ENCODE measurements at regions of chr18 and their contacts with region 1.

Region 1: DNA sequence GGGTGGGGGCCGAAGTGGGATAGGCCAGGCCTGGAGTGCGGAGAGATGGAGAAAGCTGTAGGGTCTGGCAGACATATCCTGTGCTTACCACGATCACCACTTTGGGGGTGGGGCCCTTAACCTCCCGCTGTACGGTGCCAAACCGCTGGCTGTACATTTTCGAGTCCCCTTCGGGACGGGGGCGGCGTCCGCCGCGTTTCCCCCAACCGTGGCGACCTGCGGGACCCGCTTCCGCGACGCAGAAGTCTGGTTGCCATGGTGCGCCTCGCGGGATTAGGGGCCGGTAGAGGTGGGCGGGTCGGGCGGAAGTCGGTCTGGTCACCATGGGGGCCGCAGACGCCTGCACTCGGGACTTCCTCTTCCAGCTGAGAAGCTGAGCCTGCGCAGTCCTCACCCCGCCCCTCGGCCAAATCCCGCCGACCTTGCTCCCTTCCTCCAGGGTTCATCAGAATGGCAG is at the start of gene CFAP53:
- DNase-seq: peak; percentile 93
- H3K4me3 Mint-ChIP-seq: peak within 1 kb of the TSS; percentile 79
- H3K27ac Mint-ChIP-seq: peak within 1 kb of the TSS; percentile 43
- H3K4me1 Mint-ChIP-seq: peaks cover 18% of the 10 kb centered on the region
- H3K27me3 Mint-ChIP-seq: no peaks in the 10 kb centered on the region
- total RNA-seq, gene CFAP53: 0.26 to 0.48 TPM

Region 2: GRCh38 chr18:50218432-50219197 is 47.7 kb before region 1 on chr18:
- CTCF ChIA-PET with region 1: interaction called, 8 read pairs
- POLR2A ChIA-PET with region 1: no interaction called
- intact Hi-C with region 1: loop called (anchors 2 kb)
- DNase-seq: peak; percentile 38
- H3K4me3 Mint-ChIP-seq: no peak overlapping the region
- H3K27ac Mint-ChIP-seq: no peak overlapping the region
- H3K4me1 Mint-ChIP-seq: no peaks in the 10 kb centered on the region
- H3K27me3 Mint-ChIP-seq: peaks cover 18% of the 10 kb centered on the region

Region 3: DNA sequence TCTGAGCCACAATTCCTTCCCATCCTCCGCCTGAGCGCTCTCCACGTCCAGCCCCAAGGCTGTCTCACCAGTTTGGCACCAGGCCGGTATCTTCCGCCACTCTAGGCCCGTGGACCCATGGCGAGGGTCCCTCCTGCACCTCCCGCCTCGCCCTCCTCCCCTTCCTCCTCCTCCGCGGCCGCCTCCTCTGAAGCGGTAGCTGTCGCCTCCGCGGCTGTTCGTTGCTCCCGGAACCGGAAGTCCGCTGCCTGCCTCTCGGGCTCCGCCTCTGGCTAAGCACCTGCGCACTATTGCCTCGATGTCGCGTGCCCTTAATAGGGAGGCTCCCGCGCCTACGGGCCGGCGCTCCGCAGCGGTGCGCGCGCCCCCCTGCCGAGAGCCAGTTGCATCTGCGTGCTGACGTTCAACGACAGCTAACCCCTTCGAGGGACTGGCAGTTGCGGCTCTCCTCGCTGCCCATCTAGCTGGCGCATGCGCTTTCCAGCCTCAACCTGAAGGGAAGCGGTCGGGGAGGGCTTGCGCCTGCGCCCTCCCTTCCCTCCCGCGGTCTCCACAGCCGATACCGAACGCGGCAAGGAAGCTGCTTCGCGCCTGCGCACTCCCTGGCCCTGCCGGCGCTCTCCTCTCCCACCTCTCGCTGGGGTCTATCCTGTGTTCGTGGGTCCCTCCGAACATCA is 15.2 kb after region 1 on chr18 and contains the start of gene MBD1:
- CTCF ChIA-PET with region 1: interaction called, 21 read pairs
- POLR2A ChIA-PET with region 1: interaction called, 9 read pairs
- intact Hi-C with region 1: loop called (anchors 1 kb)
- DNase-seq: peak; percentile 97
- H3K4me3 Mint-ChIP-seq: peak within 1 kb of the TSS; percentile 95
- H3K27ac Mint-ChIP-seq: peak within 1 kb of the TSS; percentile 90
- H3K4me1 Mint-ChIP-seq: peaks cover 35% of the 10 kb centered on the region
- H3K27me3 Mint-ChIP-seq: no peaks in the 10 kb centered on the region
- total RNA-seq, gene MBD1: 69.4 to 70.5 TPM

Region 4: DNA sequence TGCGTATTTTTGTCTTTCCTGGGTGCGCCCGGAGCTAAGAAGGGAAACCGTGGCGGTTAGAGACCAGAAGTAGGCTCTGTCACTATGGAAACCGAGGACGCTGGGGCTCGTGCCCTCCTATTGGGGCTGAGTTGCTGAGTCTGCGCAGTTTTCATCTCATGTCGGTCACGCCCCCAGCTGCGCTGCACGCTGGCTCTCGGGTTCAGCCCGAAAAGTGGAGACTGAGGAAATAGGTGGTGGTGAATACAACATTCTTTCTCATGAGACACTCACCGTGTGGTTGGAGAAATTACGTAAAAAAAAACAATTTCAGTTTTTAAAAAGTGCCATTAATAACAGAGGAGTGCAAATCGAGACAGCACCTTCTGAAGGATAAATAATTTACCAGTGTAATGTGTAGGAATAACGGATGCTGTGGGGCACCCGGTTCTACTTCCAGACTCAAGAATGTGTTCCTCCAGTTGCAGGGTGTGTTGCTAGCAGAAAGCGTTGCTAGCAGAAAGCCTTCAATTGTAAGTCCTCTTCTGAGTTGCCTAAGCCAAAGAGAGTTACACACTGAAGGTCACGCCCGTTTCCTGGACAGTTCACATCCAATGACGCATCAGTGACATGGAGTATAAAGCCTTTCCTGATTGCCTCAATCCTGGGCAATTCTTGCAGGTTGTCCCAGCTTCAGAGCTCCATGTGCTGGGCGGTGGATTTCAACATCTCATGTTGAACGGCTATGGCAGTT is 41.6 kb after region 1 on chr18:
- CTCF ChIA-PET with region 1: no interaction called
- POLR2A ChIA-PET with region 1: interaction called, 3 read pairs
- intact Hi-C with region 1: loop called (anchors 5 kb)
- DNase-seq: peak; percentile 93
- H3K4me3 Mint-ChIP-seq: peak overlapping the region; percentile 83
- H3K27ac Mint-ChIP-seq: no peak overlapping the region
- H3K4me1 Mint-ChIP-seq: peaks cover 4% of the 10 kb centered on the region
- H3K27me3 Mint-ChIP-seq: peaks cover 7% of the 10 kb centered on the region

Region 5: GRCh38 chr18:50374753-50375391 is 108.6 kb after region 1 on chr18 and contains the start of gene SKA1:
- CTCF ChIA-PET with region 1: interaction called, 3 read pairs
- POLR2A ChIA-PET with region 1: no interaction called
- intact Hi-C with region 1: loop called (anchors 1 kb)
- DNase-seq: peak; percentile 95
- H3K4me3 Mint-ChIP-seq: peak within 1 kb of the TSS; percentile 87
- H3K27ac Mint-ChIP-seq: peak within 1 kb of the TSS; percentile 77
- H3K4me1 Mint-ChIP-seq: no peaks in the 10 kb centered on the region
- H3K27me3 Mint-ChIP-seq: peaks cover 5% of the 10 kb centered on the region
- total RNA-seq, gene SKA1: 44.2 to 46.0 TPM

Measured in activated CD4-positive, alpha-beta memory T cell treated with anti-CD3 and anti-CD28 coated beads for 36 hours (primary cell).